ENCODE measurements at regions of chr1 and their contacts with region 1.

Region 1: GRCh38 chr1:91282695-91283420 is 121.8 kb downstream of the HFM1 start:
- DNase-seq: peak in 1 of 3 donors; percentile 76
- ATAC-seq: peak; percentile 68
- H3K4me3 ChIP-seq: no peak overlapping the region
- H3K4me1 ChIP-seq: no peaks in the 10 kb centered on the region
- CTCF ChIP-seq: peak; percentile 14

Region 2: GRCh38 chr1:91148641-91149069 is 134.2 kb before region 1 on chr1:
- intact Hi-C with region 1: no loop called
- DNase-seq: peak in 1 of 3 donors; percentile 48
- ATAC-seq: peak; percentile 88
- H3K4me3 ChIP-seq: no peak overlapping the region
- H3K4me1 ChIP-seq: peaks cover 7% of the 10 kb centered on the region
- CTCF ChIP-seq: no peak

Region 3: DNA sequence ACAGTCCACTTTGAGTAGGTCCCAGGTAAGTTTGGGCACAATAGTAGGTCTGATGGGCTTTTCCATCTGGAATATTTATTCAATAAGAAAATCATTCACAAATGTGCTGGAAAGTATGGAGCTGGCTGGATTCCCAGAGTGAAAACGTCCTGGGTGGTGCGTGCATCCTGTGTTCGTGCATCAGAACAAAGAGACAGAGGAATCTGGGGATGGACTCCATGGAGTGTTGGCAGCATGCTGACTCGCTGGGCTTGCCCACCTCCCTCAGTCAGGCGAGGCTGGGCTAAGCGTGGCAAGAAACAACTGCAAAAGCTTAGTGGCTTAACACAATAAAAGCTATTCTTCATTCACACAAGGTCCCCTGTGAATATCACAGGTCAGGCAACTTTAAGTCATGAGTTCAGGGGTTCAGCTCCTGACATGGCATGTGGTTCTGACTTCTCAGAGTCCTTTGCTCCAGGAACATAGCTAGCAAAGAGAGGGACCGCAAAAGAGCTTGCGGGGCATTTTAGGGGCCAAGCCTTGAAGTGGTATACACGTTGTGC is 109.4 kb before region 1 on chr1:
- intact Hi-C with region 1: loop called in 1 of 2 experiments (anchors 10 kb)
- DNase-seq: no peak
- ATAC-seq: no peak
- H3K4me3 ChIP-seq: no peak overlapping the region
- H3K4me1 ChIP-seq: no peaks in the 10 kb centered on the region
- CTCF ChIP-seq: no peak

Region 4: DNA sequence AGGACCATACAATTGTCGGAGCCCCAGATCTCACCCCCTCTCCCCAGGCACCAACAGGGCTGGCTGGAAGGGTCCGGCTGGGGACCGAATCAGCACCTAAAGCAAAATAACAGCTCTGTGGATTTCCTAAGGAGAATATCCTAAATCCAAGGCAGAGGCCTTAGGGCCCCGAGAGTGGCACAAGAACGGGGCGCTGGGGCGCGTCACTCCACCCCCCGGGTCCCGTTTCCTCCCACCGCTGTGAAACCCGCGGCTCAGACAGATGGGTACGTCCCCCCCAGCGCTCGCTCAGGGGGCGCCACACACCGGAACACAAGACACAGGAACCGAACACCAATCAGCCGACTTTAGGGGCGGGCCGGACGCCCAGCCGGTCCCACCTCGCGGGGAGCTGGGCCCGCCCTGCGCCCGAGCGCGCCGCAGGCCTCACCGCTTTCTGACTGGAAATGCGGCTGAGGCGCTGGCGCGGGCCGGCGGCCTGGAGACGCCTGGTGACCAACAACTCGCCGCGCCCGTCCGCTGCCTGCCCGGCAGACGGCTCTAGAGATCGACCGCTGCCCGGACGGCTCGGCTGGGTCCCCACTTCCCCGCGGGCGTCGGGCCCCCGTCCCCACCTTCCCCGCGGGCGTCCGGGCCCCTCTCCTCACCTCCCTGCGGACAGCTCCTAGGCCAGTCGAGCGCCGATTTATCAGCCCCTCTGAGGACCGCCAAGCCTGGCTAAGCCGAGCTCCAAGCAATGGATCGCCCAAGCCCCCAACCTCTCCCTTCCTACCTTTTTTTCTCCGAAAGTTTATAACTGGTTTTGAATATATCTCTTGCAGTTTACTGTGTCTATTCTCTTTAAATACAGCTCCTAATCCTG is 121.5 kb after region 1 on chr1 and contains the start of gene HFM1:
- intact Hi-C with region 1: loop called in 1 of 2 experiments (anchors 10 kb)
- DNase-seq: peak; percentile 56 to 72 (median 63)
- ATAC-seq: peak; percentile 93
- H3K4me3 ChIP-seq: no peak within 1 kb of the TSS
- H3K4me1 ChIP-seq: no peaks in the 10 kb centered on the region
- CTCF ChIP-seq: no peak
- total RNA-seq, gene HFM1: 0.12 to 1.2 (median 0.22) TPM

Region 5: DNA sequence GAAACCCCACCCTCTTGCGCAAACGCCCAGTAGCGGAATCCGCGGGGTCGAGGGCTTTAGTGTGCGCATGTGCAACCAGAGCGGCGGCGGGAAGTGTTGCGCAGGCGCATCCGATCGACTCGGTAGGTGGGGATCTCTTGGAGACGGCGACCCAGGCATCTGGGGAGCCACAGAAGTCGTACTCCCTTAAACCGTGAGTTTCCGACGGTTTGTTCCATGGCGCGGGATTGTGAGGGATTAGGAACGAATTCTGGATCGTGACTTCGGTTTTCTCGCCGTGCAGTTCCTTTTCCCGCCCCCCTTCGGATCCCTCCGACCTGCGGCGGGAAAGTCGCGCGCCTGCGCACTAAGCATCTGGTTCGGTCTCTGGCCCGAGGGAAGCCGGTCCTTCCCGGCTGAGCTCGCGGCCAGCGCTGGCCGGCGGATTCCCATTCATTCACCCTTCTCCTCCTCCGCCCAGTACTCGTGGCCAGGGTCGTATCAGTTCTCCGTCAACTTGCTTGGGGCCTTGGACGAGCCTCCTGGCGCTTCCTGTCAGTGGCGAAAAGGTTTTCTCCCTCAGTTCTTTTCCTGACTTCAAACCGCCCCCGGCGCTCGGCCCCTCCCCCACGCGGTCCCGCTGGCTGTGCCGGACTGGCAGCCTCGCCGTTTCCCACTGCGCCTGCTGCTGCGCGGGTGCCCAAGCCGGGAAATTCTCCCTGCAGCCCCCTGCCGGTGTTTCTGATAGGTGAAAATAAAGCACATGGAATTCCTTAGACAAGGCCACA is 218.1 kb after region 1 on chr1 and contains the start of gene CDC7:
- intact Hi-C with region 1: loop called in 1 of 2 experiments (anchors 5 kb)
- DNase-seq: peak; percentile 89 to 92 (median 90)
- ATAC-seq: peak; percentile 94
- H3K4me3 ChIP-seq: peak within 1 kb of the TSS; percentile 45
- H3K4me1 ChIP-seq: peaks cover 8% of the 10 kb centered on the region
- CTCF ChIP-seq: no peak
- total RNA-seq, gene CDC7: 3.6 to 5.0 (median 3.9) TPM

Region 6: DNA sequence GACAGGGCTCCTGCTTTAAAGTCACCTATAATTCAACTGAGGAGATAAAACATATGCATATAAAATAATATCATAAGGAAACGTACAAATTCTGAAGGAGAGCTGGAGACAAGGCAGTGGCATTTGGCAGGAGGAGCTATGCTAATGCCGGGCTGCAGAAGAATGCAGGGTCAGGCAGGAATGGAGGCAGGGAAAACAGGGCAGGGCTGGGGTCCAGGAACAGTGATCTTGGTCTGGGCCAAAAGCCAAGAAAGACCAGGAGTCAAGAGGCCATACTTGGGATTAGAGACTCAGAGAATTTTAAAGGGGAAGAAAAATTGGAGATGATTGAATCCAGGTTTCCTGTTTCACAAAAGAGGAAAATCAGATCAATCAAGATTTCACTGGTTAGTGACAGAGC is 646.4 kb after region 1 on chr1:
- intact Hi-C with region 1: loop called in 1 of 2 experiments (anchors 5 kb)
- DNase-seq: no peak
- ATAC-seq: no peak
- H3K4me3 ChIP-seq: no peak overlapping the region
- H3K4me1 ChIP-seq: no peaks in the 10 kb centered on the region
- CTCF ChIP-seq: no peak

Measured in mucosa of descending colon (tissue), 3 donors.